BJ (cell line): ENCODE measurements at regions of chr14 and their contacts with region 1.

Region 1: DNA sequence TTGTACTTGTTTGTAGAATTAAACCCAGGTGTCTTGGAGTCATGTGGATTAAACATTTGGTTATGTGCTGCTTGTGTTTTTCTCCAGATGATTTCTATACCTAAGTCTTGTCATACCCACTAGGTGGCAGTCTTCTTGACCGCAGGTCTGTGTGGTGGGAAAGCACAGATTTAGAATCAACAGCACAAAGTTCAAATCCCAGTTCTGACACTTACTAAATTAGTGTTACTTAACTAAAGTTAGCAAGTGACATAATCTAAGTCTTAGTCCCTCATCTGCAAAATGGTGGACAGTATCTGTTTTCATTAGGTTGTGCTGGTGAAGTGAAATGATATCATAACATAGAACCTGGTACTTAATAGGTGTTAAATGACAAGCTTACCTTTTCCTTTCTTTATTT is 151.0 kb upstream of the ARHGAP5 start:
- DNase-seq: no peak
- H3K4me3 ChIP-seq: no peak overlapping the region
- H3K27me3 ChIP-seq: no peaks in the 10 kb centered on the region
- CTCF ChIP-seq: peak; percentile 51

Region 2: GRCh38 chr14:31880935-31881334 is 45.2 kb before region 1 on chr14:
- CTCF ChIA-PET with region 1: no interaction called
- POLR2A ChIA-PET with region 1: no interaction called
- DNase-seq: peak; percentile 60
- H3K4me3 ChIP-seq: no peak overlapping the region
- H3K27me3 ChIP-seq: no peaks in the 10 kb centered on the region
- CTCF ChIP-seq: no peak

Region 3: GRCh38 chr14:31913370-31913769 is 12.8 kb before region 1 on chr14:
- CTCF ChIA-PET with region 1: interaction called, 11 read pairs
- POLR2A ChIA-PET with region 1: no interaction called
- DNase-seq: no peak
- H3K4me3 ChIP-seq: no peak overlapping the region
- H3K27me3 ChIP-seq: no peaks in the 10 kb centered on the region
- CTCF ChIP-seq: no peak

Region 4: GRCh38 chr14:31949709-31950108 is 23.6 kb after region 1 on chr14:
- CTCF ChIA-PET with region 1: no interaction called
- POLR2A ChIA-PET with region 1: no interaction called
- DNase-seq: no peak
- H3K4me3 ChIP-seq: no peak overlapping the region
- H3K27me3 ChIP-seq: no peaks in the 10 kb centered on the region
- CTCF ChIP-seq: no peak

Region 5: GRCh38 chr14:32224737-32225377 is 298.7 kb after region 1 on chr14:
- CTCF ChIA-PET with region 1: no interaction called
- POLR2A ChIA-PET with region 1: no interaction called
- DNase-seq: peak; percentile 30
- H3K4me3 ChIP-seq: no peak overlapping the region
- H3K27me3 ChIP-seq: no peaks in the 10 kb centered on the region
- CTCF ChIP-seq: peak; percentile 61